Activated B cell treated with CpG ODN at 0.5 μM for 24 hours (primary cell): ENCODE measurements at regions of chr1 and their contacts with region 1.

Region 1: GRCh38 chr1:179183857-179184256 is 45.6 kb downstream of the ABL2 start:
- DNase-seq: no peak
- ATAC-seq: no peak
- H3K4me3 Mint-ChIP-seq: no peak overlapping the region
- H3K27ac Mint-ChIP-seq: no peak overlapping the region
- H3K4me1 Mint-ChIP-seq: peaks cover 3% of the 10 kb centered on the region
- H3K27me3 Mint-ChIP-seq: no peaks in the 10 kb centered on the region
- CTCF ChIP-seq: no peak

Region 2: GRCh38 chr1:178938959-178939317 is 244.9 kb before region 1 on chr1:
- CTCF ChIA-PET with region 1: no interaction called
- POLR2A ChIA-PET with region 1: no interaction called
- intact Hi-C with region 1: no loop called
- DNase-seq: no peak
- ATAC-seq: no peak
- H3K4me3 Mint-ChIP-seq: no peak overlapping the region
- H3K27ac Mint-ChIP-seq: no peak overlapping the region
- H3K4me1 Mint-ChIP-seq: peaks cover 10% of the 10 kb centered on the region
- H3K27me3 Mint-ChIP-seq: peaks cover 5% of the 10 kb centered on the region
- CTCF ChIP-seq: no peak

Region 3: GRCh38 chr1:179217943-179218507 is 34.2 kb after region 1 on chr1:
- CTCF ChIA-PET with region 1: no interaction called
- POLR2A ChIA-PET with region 1: no interaction called
- intact Hi-C with region 1: loop called (anchors 5 kb)
- DNase-seq: no peak
- ATAC-seq: no peak
- H3K4me3 Mint-ChIP-seq: no peak overlapping the region
- H3K27ac Mint-ChIP-seq: peak overlapping the region; percentile 59
- H3K4me1 Mint-ChIP-seq: peaks cover 14% of the 10 kb centered on the region
- H3K27me3 Mint-ChIP-seq: no peaks in the 10 kb centered on the region
- CTCF ChIP-seq: no peak